ENCODE measurements at regions of chr20 and their contacts with region 1.

Region 1: DNA sequence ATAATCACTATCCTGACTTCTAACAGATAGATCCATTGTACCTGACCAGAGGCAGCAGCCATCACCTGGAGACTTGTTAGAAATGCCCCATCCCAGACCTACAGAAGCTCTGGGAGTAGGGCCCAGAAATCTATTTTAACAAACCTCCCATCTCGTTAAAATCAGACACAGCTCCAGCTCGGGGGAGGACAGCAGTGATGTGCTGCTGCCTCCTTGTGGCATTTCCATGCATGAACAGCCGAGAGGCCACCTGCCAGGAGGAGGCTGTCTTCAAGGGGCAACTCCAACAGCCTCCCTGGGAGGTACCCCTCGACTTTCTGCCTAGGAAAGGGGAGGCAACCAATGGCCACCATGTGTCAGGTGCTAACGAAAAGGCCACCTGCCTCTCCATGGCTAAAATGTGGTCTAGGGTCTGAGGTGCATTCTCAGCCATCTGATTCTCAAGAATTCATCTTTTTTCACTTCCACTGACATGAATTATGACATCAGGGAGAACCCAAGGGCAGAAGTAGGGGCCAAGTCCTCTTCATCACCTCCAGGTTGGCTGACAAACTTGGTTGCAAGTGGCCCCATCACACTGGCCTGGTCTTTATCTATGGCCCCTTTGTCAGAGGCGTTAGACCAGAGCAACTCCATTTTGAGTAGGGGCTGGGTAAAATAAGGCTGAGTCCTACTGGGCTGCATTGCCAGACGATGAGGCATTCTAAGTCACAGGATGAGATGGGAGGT is 12.2 kb upstream of the KCNK15 start:
- DNase-seq: peak in 1 of 3 donors; percentile 52
- ATAC-seq: peak; percentile 53 to 64 (median 61)
- H3K4me3 ChIP-seq: no peak overlapping the region
- H3K27ac ChIP-seq: no peak overlapping the region
- H3K4me1 ChIP-seq: peaks cover 0 to 4% (median 0%) of the 10 kb centered on the region in 4 donors
- H3K27me3 ChIP-seq: no peaks in the 10 kb centered on the region
- CTCF ChIP-seq: peak; percentile 68 to 86 (median 72)
- POLR2A ChIP-seq: no peak

Region 2: DNA sequence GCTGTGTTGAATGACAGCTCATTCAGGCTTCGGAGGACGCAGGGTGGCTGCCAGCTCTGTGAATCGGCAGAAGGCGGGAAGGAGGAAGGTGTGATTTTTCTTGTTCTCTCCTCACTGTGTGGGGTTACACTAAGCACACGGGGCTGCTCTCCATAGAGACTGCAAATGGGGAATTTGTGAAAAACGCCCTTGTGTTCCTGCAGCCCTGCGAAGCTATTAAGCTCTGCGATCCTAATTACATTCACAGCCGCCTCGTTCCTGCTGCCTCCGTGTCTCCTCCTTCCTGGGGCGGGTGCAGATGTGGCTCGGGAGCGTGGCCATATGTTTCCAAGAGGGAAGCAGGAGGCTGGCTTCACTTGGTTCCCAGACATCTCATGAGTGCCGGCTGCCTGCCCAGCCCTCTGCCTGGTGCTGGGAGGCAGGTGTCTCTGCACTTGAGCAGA is 694.8 kb before region 1 on chr20:
- intact Hi-C with region 1: no loop called
- DNase-seq: no peak
- ATAC-seq: no peak
- H3K4me3 ChIP-seq: no peak overlapping the region
- H3K27ac ChIP-seq: no peak overlapping the region
- H3K4me1 ChIP-seq: no peaks in the 10 kb centered on the region
- H3K27me3 ChIP-seq: no peaks in the 10 kb centered on the region
- CTCF ChIP-seq: no peak
- POLR2A ChIP-seq: no peak

Region 3: GRCh38 chr20:44598423-44599305 is 134.8 kb before region 1 on chr20:
- intact Hi-C with region 1: no loop called
- DNase-seq: no peak
- ATAC-seq: peak; percentile 64 to 76 (median 72)
- H3K4me3 ChIP-seq: no peak overlapping the region
- H3K27ac ChIP-seq: peak overlapping the region; percentile 33 to 47 (median 36)
- H3K4me1 ChIP-seq: peaks cover 0 to 26% (median 7%) of the 10 kb centered on the region in 4 donors
- H3K27me3 ChIP-seq: no peaks in the 10 kb centered on the region
- CTCF ChIP-seq: no peak
- POLR2A ChIP-seq: no peak

Region 4: GRCh38 chr20:44651684-44652423 is 81.7 kb before region 1 on chr20 and contains the start of gene ADA:
- intact Hi-C with region 1: no loop called
- DNase-seq: peak; percentile 79 to 83 (median 80)
- ATAC-seq: peak; percentile 79 to 90 (median 85)
- H3K4me3 ChIP-seq: peak within 1 kb of the TSS; percentile 74 to 92 (median 83)
- H3K27ac ChIP-seq: peak within 1 kb of the TSS; percentile 50 to 79 (median 78)
- H3K4me1 ChIP-seq: no peaks in the 10 kb centered on the region
- H3K27me3 ChIP-seq: no peaks in the 10 kb centered on the region
- CTCF ChIP-seq: no peak
- POLR2A ChIP-seq: peak; percentile 49
- total RNA-seq, gene ADA: 2.2 to 8.6 (median 3.7) TPM

Region 5: DNA sequence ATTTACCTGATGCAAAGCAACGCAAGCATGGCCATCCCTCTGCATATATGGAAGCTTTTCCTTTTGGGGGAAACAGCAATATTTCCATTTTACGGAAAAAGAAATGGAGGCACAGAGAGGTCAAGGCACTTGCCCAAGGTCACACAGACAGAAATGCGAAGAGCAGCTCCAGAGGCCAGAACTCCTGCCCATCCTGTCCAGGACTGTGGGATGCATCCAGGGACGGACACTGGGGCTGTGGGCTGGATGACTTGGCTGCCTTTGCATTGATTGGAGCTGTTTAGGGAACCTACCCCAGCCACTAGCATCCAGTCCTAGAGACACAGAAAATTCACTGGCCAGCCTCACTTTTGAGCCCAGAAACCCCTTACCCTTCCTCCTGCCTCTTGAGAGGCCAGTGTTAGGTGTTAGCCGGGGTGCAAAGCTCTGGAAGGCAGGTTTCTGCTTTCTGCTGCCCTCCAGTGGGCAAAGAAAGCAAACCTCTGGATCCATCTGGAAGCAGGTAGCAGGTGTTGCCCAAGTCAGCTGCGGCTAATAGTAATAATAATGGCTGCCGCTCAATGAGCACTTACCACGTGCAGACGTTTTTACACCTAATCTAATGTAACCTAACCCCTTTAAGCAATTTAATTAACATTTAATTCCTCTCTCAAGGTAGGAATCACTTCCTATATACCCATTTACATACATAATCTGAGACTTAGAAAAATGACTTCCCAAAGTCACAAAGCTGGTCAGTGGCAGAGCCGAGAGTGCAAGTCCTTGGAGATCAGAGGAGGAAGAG is 50.0 kb before region 1 on chr20:
- intact Hi-C with region 1: loop called in 1 of 2 experiments (anchors 5 kb)
- DNase-seq: peak in 2 of 3 donors; percentile 47 to 60
- ATAC-seq: peak; percentile 81 to 89 (median 86)
- H3K4me3 ChIP-seq: no peak overlapping the region
- H3K27ac ChIP-seq: no peak overlapping the region
- H3K4me1 ChIP-seq: peaks cover 0 to 9% (median 4%) of the 10 kb centered on the region in 4 donors
- H3K27me3 ChIP-seq: no peaks in the 10 kb centered on the region
- CTCF ChIP-seq: peak; percentile 44 to 81 (median 58)
- POLR2A ChIP-seq: no peak